Uterus (tissue), 4 donors: ENCODE measurements at regions of chr12 and their contacts with region 1.

Region 1: DNA sequence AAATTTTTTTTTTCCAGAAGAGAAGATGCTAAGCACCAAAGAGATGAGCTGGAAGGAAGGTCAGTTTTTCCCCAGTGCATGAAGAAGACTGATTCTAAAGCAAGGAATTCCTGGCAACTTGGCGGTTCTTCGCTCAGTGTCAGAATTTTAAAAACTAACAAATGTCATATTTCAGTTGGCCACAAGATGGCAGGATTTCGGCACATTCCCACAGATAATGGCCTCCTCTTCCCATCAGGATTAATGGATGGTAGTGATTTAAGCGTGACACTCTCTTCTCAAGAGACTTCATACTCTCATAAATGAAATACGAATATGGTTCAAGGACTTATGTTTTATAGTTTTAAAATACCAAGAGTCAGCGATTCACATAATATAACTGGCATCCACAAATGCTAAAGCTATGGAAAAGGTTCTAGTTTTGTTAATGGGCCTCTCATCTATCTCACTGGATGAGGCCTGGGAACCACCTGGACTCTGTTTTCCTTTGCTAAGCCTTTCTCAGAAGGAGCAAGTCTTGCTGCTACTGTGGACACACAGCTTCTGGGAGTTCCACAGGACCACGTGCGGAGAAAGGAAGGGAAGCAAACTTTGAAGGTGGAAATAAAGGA is 46.1 kb upstream of the PTPRO start:
- DNase-seq: peak in 1 of 2 donors; percentile 45
- H3K4me3 ChIP-seq: no peak overlapping the region
- H3K27ac ChIP-seq: peak overlapping the region; percentile 80 to 83
- H3K4me1 ChIP-seq: peaks cover 0 to 9% of the 10 kb centered on the region in 2 donors
- H3K27me3 ChIP-seq: no peaks in the 10 kb centered on the region
- CTCF ChIP-seq: peak; percentile 68 to 75 (median 74)
- POLR2A ChIP-seq: no peak

Region 2: DNA sequence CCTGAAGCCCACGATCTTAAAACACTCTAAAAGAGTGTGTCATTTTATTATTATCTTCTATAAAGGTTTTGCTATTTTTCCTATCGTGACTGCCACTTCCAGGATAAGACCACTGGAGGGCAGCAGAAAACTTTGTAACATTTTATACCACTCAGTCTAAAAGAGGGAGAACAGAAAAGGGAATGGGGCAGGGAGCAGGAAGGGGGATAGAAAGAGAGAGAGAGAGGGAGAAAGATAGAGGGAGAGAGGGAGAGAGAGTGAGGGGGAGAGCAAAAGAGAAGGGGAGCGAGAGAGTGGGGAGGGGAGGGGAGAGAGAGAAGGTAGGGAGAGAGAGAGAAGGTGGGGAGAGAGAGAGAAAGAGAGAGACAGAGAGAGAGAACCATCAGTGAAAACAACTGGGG is 430.8 kb before region 1 on chr12:
- intact Hi-C with region 1: loop called (anchors 10 kb)
- DNase-seq: peak; percentile 48 to 69
- H3K4me3 ChIP-seq: no peak overlapping the region
- H3K27ac ChIP-seq: peak overlapping the region; percentile 53 to 73
- H3K4me1 ChIP-seq: peaks cover 0 to 9% of the 10 kb centered on the region in 2 donors
- H3K27me3 ChIP-seq: no peaks in the 10 kb centered on the region
- CTCF ChIP-seq: peak; percentile 62 to 89 (median 82)
- POLR2A ChIP-seq: no peak